A549 (cell line): ENCODE measurements at regions of chr16 and their contacts with region 1.

Region 1: GRCh38 chr16:57734925-57735754 is 430 bp upstream of the KATNB1 start:
- DNase-seq: peak; percentile 99 to 100
- ATAC-seq: peak; percentile 88 to 95
- H3K4me3 ChIP-seq: peak overlapping the region; percentile 72
- H3K27ac ChIP-seq: peak overlapping the region; percentile 92 to 93
- H3K4me1 ChIP-seq: peaks cover 12% of the 10 kb centered on the region
- CTCF ChIP-seq: no peak
- EP300 ChIP-seq: no peak
- POLR2A ChIP-seq: 0 out of 2 replicates have a peak, but pooled peaks have one; percentile 8
- RAD21 ChIP-seq: no peak

Region 2: DNA sequence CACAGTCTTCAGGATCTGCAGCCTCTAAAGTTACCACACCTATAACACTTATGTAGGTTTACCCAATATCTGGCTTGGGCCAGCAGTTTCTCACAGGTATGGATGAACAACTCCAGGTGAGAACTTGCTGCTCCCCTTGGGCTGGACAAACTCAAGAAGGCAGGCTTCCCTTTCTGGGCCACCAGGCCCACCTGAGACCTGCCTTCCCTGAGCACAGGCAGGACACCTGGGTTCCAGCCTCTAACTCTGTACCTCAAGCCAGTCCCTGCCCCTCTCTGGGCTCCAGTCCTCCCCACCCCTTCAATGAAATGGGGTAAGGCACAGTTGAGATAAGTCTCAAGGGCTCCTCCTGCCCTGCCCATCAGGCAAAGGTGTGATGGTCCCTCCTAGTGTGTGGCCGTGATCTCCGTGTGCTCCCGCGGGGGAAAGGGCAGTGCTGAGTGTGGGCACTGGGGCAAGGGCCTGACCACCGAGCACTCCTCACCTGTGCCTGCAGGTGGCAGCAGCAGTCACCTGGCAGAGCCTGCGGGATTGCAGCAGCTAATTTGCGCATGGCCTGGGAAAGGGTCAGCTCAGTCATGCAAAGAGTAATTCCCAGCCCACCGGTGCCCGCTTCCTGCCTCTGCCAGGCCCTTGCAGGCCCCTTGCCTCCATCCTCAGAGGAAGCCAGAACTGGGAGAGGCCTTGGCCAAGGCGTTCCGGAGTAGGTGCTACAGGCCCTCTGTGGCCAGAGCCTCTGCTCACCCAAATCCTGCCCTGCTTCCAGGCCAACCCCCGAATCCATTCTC is 134.9 kb before region 1 on chr16:
- CTCF ChIA-PET with region 1: interaction called, 14 read pairs
- POLR2A ChIA-PET with region 1: no interaction called
- DNase-seq: peak; percentile 68 to 81
- ATAC-seq: peak; percentile 97 to 99
- H3K4me3 ChIP-seq: no peak overlapping the region
- H3K27ac ChIP-seq: peak overlapping the region; percentile 65 to 79
- H3K4me1 ChIP-seq: peaks cover 21% of the 10 kb centered on the region
- CTCF ChIP-seq: peak; percentile 82
- EP300 ChIP-seq: no peak
- POLR2A ChIP-seq: no peak
- RAD21 ChIP-seq: peak; percentile 89 to 90

Region 3: DNA sequence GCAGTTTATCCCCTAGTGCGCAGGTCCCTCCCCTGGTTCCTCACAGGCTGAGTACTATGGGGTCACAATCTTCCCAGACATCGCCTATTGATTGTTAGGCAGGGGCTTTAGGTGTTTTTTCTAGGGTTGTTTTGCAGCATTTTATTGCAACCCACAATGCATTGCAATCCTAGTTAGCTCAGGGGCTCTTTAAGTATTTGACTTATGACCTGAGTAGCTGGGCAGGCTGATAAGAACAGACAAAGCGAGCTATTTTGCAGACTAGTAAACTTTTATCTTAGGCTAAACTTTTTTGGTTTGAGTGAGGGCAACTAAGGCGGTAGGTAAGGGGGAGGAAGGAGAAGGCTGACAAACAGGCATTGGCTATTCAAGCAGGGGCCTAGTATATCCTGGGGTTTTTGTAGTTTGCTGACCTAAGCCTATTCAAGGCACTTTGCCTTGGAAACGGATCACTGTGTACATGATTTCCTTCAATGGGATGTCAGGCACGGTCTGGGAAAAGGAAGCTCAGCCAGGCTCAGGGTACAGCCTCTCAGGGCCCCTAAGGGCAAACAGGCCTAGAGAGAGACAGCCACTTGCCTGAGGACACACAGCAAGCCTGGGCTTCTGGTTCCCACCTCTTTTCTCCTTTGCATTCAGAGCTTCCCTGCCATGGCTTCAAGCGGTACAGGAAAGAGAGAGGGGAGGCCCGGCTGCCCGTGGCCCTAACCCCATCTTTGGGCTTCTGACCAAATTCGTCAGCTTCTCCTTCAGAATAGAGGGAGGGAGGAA is 34.2 kb before region 1 on chr16:
- CTCF ChIA-PET with region 1: no interaction called
- POLR2A ChIA-PET with region 1: no interaction called
- DNase-seq: no peak
- ATAC-seq: no peak
- H3K4me3 ChIP-seq: no peak overlapping the region
- H3K27ac ChIP-seq: no peak overlapping the region
- H3K4me1 ChIP-seq: peaks cover 13% of the 10 kb centered on the region
- CTCF ChIP-seq: no peak
- EP300 ChIP-seq: no peak
- POLR2A ChIP-seq: no peak
- RAD21 ChIP-seq: no peak

Region 4: DNA sequence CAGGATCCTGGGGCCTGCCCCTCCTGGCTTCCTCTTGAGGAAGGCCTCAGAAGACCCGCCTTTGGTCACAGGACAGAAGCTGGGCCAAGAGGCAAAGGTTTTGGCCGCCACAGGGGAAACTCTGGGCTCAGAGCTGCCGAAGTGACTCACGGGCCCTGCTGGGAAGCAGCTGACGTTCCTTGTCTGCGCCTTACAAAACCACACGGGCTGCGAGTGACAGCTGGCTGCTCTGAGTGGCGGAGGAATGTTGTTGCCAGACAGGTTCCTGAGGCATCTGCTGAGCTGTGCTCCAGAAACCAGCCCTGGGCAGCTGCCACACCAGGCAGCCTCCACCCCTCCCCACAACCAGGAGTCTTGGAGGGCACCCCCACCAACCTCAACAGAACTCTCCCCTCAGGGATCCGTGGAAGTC is 81.2 kb after region 1 on chr16:
- CTCF ChIA-PET with region 1: no interaction called
- POLR2A ChIA-PET with region 1: no interaction called
- DNase-seq: peak; percentile 62 to 81
- ATAC-seq: peak; percentile 72 to 79
- H3K4me3 ChIP-seq: no peak overlapping the region
- H3K27ac ChIP-seq: peak overlapping the region; percentile 77 to 97
- H3K4me1 ChIP-seq: peaks cover 76% of the 10 kb centered on the region
- CTCF ChIP-seq: no peak
- EP300 ChIP-seq: peak in 1 of 2 experiments; percentile 57; a peak in 1 of 5 replicates
- POLR2A ChIP-seq: no peak
- RAD21 ChIP-seq: 0 out of 5 replicates have a peak, but pooled peaks of 1 of the 2 experiments have one; percentile 15